CD4-positive, alpha-beta T cell (primary cell): ENCODE measurements at regions of chr10 and their contacts with region 1.

Region 1: DNA sequence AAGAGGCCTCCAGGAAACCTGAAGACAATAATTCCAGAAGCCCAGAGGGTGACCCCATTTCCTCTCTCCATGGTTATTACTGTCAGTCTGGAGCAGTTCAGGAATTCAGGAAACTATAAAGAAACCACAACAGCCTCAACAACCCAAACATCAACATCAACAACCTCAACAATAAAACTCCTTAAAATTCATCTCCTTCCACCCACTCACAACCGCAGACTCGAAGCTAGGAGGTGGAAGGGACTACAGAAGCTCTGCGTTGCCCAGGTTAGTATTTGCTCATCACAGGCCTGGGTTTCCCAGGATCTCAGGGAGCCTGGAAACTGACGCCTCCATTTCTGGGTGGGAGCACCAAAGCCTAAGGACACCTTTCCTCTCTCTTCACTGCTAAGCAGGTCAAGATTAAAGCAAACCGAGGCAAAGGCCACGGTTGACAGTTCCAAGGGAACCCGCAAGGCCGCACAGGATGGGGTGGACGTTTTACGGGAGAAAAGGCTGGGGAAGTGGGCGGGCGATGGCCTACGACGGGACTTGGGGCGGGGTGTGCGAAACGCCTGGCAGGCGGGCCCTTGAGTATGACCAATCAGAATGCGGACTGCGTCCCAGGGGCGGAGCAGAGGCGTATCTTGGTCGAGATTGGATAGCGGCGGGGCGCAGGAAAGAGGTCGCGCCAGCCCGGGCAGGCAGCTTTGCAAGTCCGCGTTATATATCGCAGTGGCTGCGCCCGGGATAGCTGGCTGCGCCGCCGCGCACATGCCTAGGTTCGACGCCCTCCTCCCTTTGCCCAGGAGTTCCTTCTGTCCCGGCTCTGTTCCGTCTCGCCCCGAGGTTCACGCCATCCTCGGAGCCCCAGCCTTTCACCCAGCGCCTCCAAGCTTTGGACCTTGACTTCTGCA is at the start of gene ELOVL3:
- DNase-seq: peak; percentile 64 to 93 (median 80)
- ATAC-seq: peak; percentile 92
- H3K4me3 ChIP-seq: peak within 1 kb of the TSS; percentile 44
- H3K4me3 Mint-ChIP-seq: peak within 1 kb of the TSS; percentile 68
- H3K27ac ChIP-seq: no peak within 1 kb of the TSS
- H3K27ac Mint-ChIP-seq: no peak within 1 kb of the TSS
- H3K4me1 ChIP-seq: peaks cover 28% of the 10 kb centered on the region
- H3K4me1 Mint-ChIP-seq: peaks cover 18% of the 10 kb centered on the region
- H3K27me3 ChIP-seq: peaks cover 22 to 31% of the 10 kb centered on the region in 2 experiments
- H3K27me3 Mint-ChIP-seq: peaks cover 69% of the 10 kb centered on the region
- CTCF ChIP-seq: no peak
- total RNA-seq, gene ELOVL3: not detected

Region 2: GRCh38 chr10:101655570-101655969 is 570.3 kb before region 1 on chr10:
- CTCF ChIA-PET with region 1: no interaction called
- POLR2A ChIA-PET with region 1: no interaction called
- intact Hi-C with region 1: no loop called
- DNase-seq: no peak
- ATAC-seq: no peak
- H3K4me3 ChIP-seq: no peak overlapping the region
- H3K4me3 Mint-ChIP-seq: no peak overlapping the region
- H3K27ac ChIP-seq: no peak overlapping the region
- H3K27ac Mint-ChIP-seq: no peak overlapping the region
- H3K4me1 ChIP-seq: no peaks in the 10 kb centered on the region
- H3K4me1 Mint-ChIP-seq: no peaks in the 10 kb centered on the region
- H3K27me3 ChIP-seq: no peaks in the 10 kb centered on the region
- H3K27me3 Mint-ChIP-seq: no peaks in the 10 kb centered on the region
- CTCF ChIP-seq: no peak

Region 3: GRCh38 chr10:102120142-102120990 is 105.5 kb before region 1 on chr10 and contains the start of gene LDB1:
- CTCF ChIA-PET with region 1: no interaction called
- POLR2A ChIA-PET with region 1: no interaction called
- intact Hi-C with region 1: no loop called
- DNase-seq: peak; percentile 52 to 92 (median 66)
- ATAC-seq: peak; percentile 38
- H3K4me3 ChIP-seq: peak within 1 kb of the TSS; percentile 74
- H3K4me3 Mint-ChIP-seq: peak within 1 kb of the TSS; percentile 95
- H3K27ac ChIP-seq: peak within 1 kb of the TSS; percentile 88 to 96
- H3K27ac Mint-ChIP-seq: peak within 1 kb of the TSS; percentile 89
- H3K4me1 ChIP-seq: peaks cover 57% of the 10 kb centered on the region
- H3K4me1 Mint-ChIP-seq: peaks cover 55% of the 10 kb centered on the region
- H3K27me3 ChIP-seq: no peaks in the 10 kb centered on the region
- H3K27me3 Mint-ChIP-seq: no peaks in the 10 kb centered on the region
- CTCF ChIP-seq: no peak
- total RNA-seq, gene LDB1: 116 to 117 TPM

Region 4: GRCh38 chr10:102167861-102168260 is 58.0 kb before region 1 on chr10:
- CTCF ChIA-PET with region 1: interaction called, 6 read pairs
- POLR2A ChIA-PET with region 1: interaction called, 6 read pairs
- intact Hi-C with region 1: loop called in 1 of 2 experiments (anchors 5 kb)
- DNase-seq: no peak
- ATAC-seq: no peak
- H3K4me3 ChIP-seq: no peak overlapping the region
- H3K4me3 Mint-ChIP-seq: no peak overlapping the region
- H3K27ac ChIP-seq: no peak overlapping the region
- H3K27ac Mint-ChIP-seq: no peak overlapping the region
- H3K4me1 ChIP-seq: peaks cover 10% of the 10 kb centered on the region
- H3K4me1 Mint-ChIP-seq: peaks cover 8% of the 10 kb centered on the region
- H3K27me3 ChIP-seq: no peaks in the 10 kb centered on the region
- H3K27me3 Mint-ChIP-seq: peaks cover 4% of the 10 kb centered on the region
- CTCF ChIP-seq: no peak

Region 5: GRCh38 chr10:102245101-102245931 is 19.4 kb after region 1 on chr10 and contains the start of gene GBF1:
- CTCF ChIA-PET with region 1: interaction called, 79 read pairs
- POLR2A ChIA-PET with region 1: interaction called, 13 read pairs
- intact Hi-C with region 1: loop called in 1 of 2 experiments (anchors 1 kb)
- DNase-seq: peak; percentile 76 to 99 (median 84)
- ATAC-seq: peak; percentile 89
- H3K4me3 ChIP-seq: peak within 1 kb of the TSS; percentile 74
- H3K4me3 Mint-ChIP-seq: peak within 1 kb of the TSS; percentile 96
- H3K27ac ChIP-seq: peak within 1 kb of the TSS; percentile 84 to 88
- H3K27ac Mint-ChIP-seq: peak within 1 kb of the TSS; percentile 86
- H3K4me1 ChIP-seq: peaks cover 60% of the 10 kb centered on the region
- H3K4me1 Mint-ChIP-seq: peaks cover 58% of the 10 kb centered on the region
- H3K27me3 ChIP-seq: peaks cover 20 to 28% of the 10 kb centered on the region in 2 experiments
- H3K27me3 Mint-ChIP-seq: peaks cover 40% of the 10 kb centered on the region
- CTCF ChIP-seq: no peak
- total RNA-seq, gene GBF1: 28.8 to 30.9 TPM

Region 6: GRCh38 chr10:102352066-102352715 is 126.3 kb after region 1 on chr10:
- CTCF ChIA-PET with region 1: interaction called, 133 read pairs
- POLR2A ChIA-PET with region 1: interaction called, 26 read pairs
- intact Hi-C with region 1: loop called (anchors 1 kb)
- DNase-seq: peak; percentile 54 to 83 (median 66)
- ATAC-seq: peak; percentile 72
- H3K4me3 ChIP-seq: no peak overlapping the region
- H3K4me3 Mint-ChIP-seq: no peak overlapping the region
- H3K27ac ChIP-seq: no peak overlapping the region
- H3K27ac Mint-ChIP-seq: no peak overlapping the region
- H3K4me1 ChIP-seq: no peaks in the 10 kb centered on the region
- H3K4me1 Mint-ChIP-seq: no peaks in the 10 kb centered on the region
- H3K27me3 ChIP-seq: no peaks in the 10 kb centered on the region
- H3K27me3 Mint-ChIP-seq: no peaks in the 10 kb centered on the region
- CTCF ChIP-seq: peak; percentile 96

Region 7: GRCh38 chr10:102480396-102480795 is 254.5 kb after region 1 on chr10:
- CTCF ChIA-PET with region 1: interaction called, 12 read pairs
- POLR2A ChIA-PET with region 1: no interaction called
- intact Hi-C with region 1: loop called (anchors 1 kb)
- DNase-seq: no peak
- ATAC-seq: no peak
- H3K4me3 ChIP-seq: no peak overlapping the region
- H3K4me3 Mint-ChIP-seq: peak overlapping the region; percentile 15
- H3K27ac ChIP-seq: no peak overlapping the region
- H3K27ac Mint-ChIP-seq: no peak overlapping the region
- H3K4me1 ChIP-seq: peaks cover 16% of the 10 kb centered on the region
- H3K4me1 Mint-ChIP-seq: peaks cover 17% of the 10 kb centered on the region
- H3K27me3 ChIP-seq: no peaks in the 10 kb centered on the region
- H3K27me3 Mint-ChIP-seq: no peaks in the 10 kb centered on the region
- CTCF ChIP-seq: no peak

Region 8: GRCh38 chr10:102583435-102584417 is 357.8 kb after region 1 on chr10:
- CTCF ChIA-PET with region 1: interaction called, 17 read pairs
- POLR2A ChIA-PET with region 1: interaction called, 6 read pairs
- intact Hi-C with region 1: loop called (anchors 1 kb)
- DNase-seq: peak; percentile 71 to 90 (median 78)
- ATAC-seq: peak; percentile 99
- H3K4me3 ChIP-seq: no peak overlapping the region
- H3K4me3 Mint-ChIP-seq: no peak overlapping the region
- H3K27ac ChIP-seq: no peak overlapping the region
- H3K27ac Mint-ChIP-seq: peak overlapping the region; percentile 28
- H3K4me1 ChIP-seq: peaks cover 10% of the 10 kb centered on the region
- H3K4me1 Mint-ChIP-seq: peaks cover 16% of the 10 kb centered on the region
- H3K27me3 ChIP-seq: no peaks in the 10 kb centered on the region
- H3K27me3 Mint-ChIP-seq: no peaks in the 10 kb centered on the region
- CTCF ChIP-seq: peak; percentile 90